HEK293 (cell line): ENCODE measurements at regions of chr12 and their contacts with region 1.

Region 1: DNA sequence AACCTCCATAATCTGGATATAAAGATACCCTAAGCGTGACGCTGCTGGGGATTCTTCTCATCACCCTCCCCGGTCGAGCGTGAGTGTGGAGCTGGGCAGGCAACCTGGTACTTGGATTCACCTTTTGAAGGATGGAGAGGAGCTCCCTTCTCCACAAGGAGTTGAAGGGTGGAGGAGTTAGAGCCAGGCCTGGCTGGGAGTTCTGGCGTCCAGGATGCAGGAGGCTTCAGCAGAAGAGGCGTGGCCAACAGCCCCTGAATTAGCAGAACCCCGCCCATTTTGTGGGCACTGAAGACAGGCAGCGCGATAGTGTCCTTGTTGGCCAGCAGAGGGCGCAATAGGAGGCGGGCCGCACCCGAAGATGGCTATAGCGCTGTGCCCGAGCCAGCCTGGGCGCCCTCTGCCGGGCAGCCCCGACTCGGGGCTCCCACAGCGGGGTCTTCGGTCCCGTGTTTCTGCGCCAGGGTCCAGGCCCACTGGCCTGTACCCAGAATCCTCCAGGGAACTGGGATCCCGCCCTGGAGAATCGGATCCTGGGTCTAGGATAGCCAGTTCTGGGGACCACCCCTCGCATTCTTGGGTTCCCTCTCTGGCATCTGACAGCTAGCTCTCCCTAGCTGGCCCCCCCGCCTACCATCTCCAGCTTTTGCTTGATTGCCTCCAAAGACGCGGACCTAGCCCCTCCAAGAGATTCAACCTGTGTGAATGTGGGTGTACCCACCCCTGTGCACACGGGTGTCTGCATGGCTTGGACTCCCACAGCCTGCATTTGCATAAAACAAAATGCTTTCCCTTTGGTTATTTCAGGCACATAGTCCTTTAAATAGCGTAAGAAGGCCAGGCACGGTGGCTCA is 26.0 kb upstream of the SMUG1 start:
- H3K4me3 ChIP-seq: peak overlapping the region; percentile 19
- H3K27ac ChIP-seq: no peak overlapping the region
- H3K4me1 ChIP-seq: no peaks in the 10 kb centered on the region
- CTCF ChIP-seq: peak; percentile 99

Region 2: DNA sequence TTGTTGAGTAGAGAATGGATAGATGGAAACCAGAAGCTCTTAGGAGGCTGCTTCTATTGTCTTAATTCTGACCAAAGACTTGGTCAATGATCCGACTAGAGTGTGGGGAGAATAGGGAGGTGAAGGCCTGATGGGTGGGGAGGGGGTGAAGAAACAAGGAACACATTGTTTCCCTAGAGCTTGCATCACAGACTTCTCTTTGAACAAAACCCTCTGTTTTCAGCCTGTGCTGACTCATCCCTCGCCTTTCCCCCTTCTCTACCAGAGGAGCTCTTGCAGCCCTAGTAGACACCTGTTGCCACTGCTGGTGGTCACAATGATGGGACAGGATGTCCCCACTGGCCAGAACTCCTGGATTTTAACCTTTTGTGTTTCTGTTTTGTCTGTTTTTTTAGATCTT is 416.2 kb before region 1 on chr12:
- CTCF ChIA-PET with region 1: no interaction called
- POLR2A ChIA-PET with region 1: no interaction called
- H3K4me3 ChIP-seq: no peak overlapping the region
- H3K27ac ChIP-seq: no peak overlapping the region
- H3K4me1 ChIP-seq: peaks cover 7% of the 10 kb centered on the region
- CTCF ChIP-seq: no peak

Region 3: DNA sequence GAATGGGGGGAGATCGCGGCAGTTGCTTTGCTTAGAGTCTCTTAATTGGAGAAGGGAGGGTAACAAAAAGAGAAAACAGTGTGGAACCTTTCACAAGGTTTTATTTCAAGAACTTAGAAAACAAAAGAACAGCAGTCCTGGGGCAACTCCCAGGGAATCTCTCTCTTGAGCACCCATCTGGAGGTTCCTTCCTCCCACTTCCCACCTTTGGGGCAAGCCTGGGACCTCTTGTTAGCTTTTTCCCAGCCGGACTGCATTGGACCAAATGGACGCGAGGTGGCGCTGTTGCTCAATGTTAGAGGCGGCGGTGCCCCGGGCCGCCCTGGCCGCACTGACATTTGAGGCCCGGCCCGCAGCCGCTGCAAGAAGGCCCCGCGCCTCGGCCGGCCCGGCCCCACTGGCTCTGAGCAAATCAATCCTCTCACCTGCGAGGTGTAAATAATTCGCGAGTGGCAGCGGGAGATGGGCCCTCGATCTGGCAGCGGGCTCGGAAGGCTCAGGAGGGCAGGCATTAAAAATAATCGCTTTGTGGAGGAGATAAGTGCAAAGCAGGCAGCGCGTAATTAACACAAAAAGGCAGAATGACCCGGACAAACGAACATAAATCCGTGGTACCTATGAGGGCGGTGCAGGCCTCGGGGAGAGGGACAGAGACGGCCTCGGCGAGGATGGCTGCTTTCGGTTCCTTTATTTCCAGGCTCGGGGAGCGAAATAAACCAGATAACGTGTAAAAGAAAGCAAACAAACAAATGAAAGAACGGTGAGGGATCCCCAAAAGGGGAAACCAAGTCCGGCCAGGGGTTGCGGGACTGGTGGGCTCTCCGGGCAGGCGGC is 208.7 kb before region 1 on chr12:
- CTCF ChIA-PET with region 1: interaction called, 111 read pairs
- POLR2A ChIA-PET with region 1: interaction called, 3 read pairs
- H3K4me3 ChIP-seq: no peak overlapping the region
- H3K27ac ChIP-seq: peak overlapping the region; percentile 45; the same call in 1 of the 2 replicates
- H3K4me1 ChIP-seq: peaks cover 40% of the 10 kb centered on the region
- CTCF ChIP-seq: peak; percentile 88

Region 4: DNA sequence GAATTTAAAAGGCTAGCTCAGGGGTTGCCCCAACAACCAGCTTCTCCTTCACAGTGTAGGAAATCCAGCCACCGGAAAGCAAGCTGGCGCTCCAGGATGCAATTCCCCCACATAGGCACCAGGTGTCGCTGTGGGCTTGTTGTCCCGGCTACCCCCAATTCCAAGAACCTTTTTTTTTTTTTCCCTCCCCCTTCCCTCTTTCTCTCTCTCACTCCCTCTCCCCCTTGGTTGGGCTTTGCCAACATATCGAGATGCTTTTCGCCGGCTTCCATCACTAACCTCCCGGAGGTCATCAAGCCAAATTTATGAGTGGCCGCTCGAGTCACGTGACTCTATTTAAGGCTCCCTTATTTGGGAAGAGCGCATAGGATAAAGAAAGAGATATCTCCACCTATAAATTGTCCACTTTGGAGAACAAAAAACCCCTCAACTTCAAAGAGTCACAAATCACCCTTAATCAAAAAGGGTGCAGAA is 182.1 kb before region 1 on chr12 and contains the start of gene HOXC5:
- CTCF ChIA-PET with region 1: interaction called, 34 read pairs
- POLR2A ChIA-PET with region 1: interaction called, 3 read pairs
- H3K4me3 ChIP-seq: peak within 1 kb of the TSS; percentile 29
- H3K27ac ChIP-seq: peak within 1 kb of the TSS; percentile 100
- H3K4me1 ChIP-seq: peaks cover 45% of the 10 kb centered on the region
- CTCF ChIP-seq: peak; percentile 99

Region 5: GRCh38 chr12:54201001-54201794 is 13.6 kb before region 1 on chr12:
- CTCF ChIA-PET with region 1: interaction called, 86 read pairs
- POLR2A ChIA-PET with region 1: interaction called, 3 read pairs
- H3K4me3 ChIP-seq: no peak overlapping the region
- H3K27ac ChIP-seq: no peak overlapping the region
- H3K4me1 ChIP-seq: peaks cover 10% of the 10 kb centered on the region
- CTCF ChIP-seq: peak; percentile 94

Region 6: GRCh38 chr12:54280468-54281260 is 65.9 kb after region 1 on chr12 and contains the start of gene HNRNPA1:
- CTCF ChIA-PET with region 1: interaction called, 5 read pairs
- POLR2A ChIA-PET with region 1: interaction called, 12 read pairs
- H3K4me3 ChIP-seq: peak within 1 kb of the TSS; percentile 99
- H3K27ac ChIP-seq: peak within 1 kb of the TSS; percentile 94
- H3K4me1 ChIP-seq: peaks cover 5% of the 10 kb centered on the region
- CTCF ChIP-seq: no peak; the same call in 1 of the 2 replicates

Region 7: GRCh38 chr12:54368709-54369583 is 154.2 kb after region 1 on chr12:
- CTCF ChIA-PET with region 1: interaction called, 53 read pairs
- POLR2A ChIA-PET with region 1: interaction called, 3 read pairs
- H3K4me3 ChIP-seq: no peak overlapping the region
- H3K27ac ChIP-seq: no peak overlapping the region
- H3K4me1 ChIP-seq: peaks cover 10% of the 10 kb centered on the region
- CTCF ChIP-seq: peak; percentile 79